Body of pancreas (tissue), 4 donors: ENCODE measurements at regions of chr11 and their contacts with region 1.

Region 1: GRCh38 chr11:10405855-10406592 is 49.0 kb upstream of the AMPD3 start:
- DNase-seq: peak; percentile 55 to 85 (median 74)
- ATAC-seq: peak; percentile 89
- H3K4me3 ChIP-seq: no peak overlapping the region
- H3K27ac ChIP-seq: no peak overlapping the region
- H3K4me1 ChIP-seq: no peaks in the 10 kb centered on the region
- H3K27me3 ChIP-seq: no peaks in the 10 kb centered on the region
- CTCF ChIP-seq: peak; percentile 56 to 88 (median 76)
- POLR2A ChIP-seq: no peak

Region 2: GRCh38 chr11:10653926-10654810 is 248.1 kb after region 1 on chr11:
- intact Hi-C with region 1: loop called (anchors 10 kb)
- DNase-seq: peak in 3 of 4 donors; percentile 27 to 47 (median 38)
- ATAC-seq: peak; percentile 80
- H3K4me3 ChIP-seq: no peak overlapping the region
- H3K27ac ChIP-seq: no peak overlapping the region
- H3K4me1 ChIP-seq: peaks cover 5% of the 10 kb centered on the region
- H3K27me3 ChIP-seq: no peaks in the 10 kb centered on the region
- CTCF ChIP-seq: peak; percentile 41 to 80 (median 67)
- POLR2A ChIP-seq: no peak

Region 3: GRCh38 chr11:10735481-10736475 is 329.8 kb after region 1 on chr11:
- intact Hi-C with region 1: loop called (anchors 5 kb)
- DNase-seq: peak; percentile 88 to 93 (median 92)
- ATAC-seq: peak; percentile 98
- H3K4me3 ChIP-seq: no peak overlapping the region
- H3K27ac ChIP-seq: peak overlapping the region in 2 of 4 donors; percentile 0 to 33
- H3K4me1 ChIP-seq: peaks cover 10% of the 10 kb centered on the region
- H3K27me3 ChIP-seq: no peaks in the 10 kb centered on the region
- CTCF ChIP-seq: peak; percentile 95 to 98 (median 96)
- POLR2A ChIP-seq: no peak